Motor neuron (in vitro differentiated cells): ENCODE measurements at regions of chr3 and their contacts with region 1.

Region 1: GRCh38 chr3:136752422-136753325 is 496 bp upstream of the STAG1 start:
- ATAC-seq: peak; percentile 82 to 90 (median 88)
- H3K4me3 ChIP-seq: peak overlapping the region; percentile 62 to 87 (median 78)
- H3K27ac ChIP-seq: peak overlapping the region; percentile 97 to 99
- H3K4me1 ChIP-seq: peaks cover 19 to 26% of the 10 kb centered on the region in 2 donors

Region 2: GRCh38 chr3:136658946-136659682 is 93.6 kb before region 1 on chr3:
- in situ Hi-C with region 1: no loop called
- ATAC-seq: peak; percentile 75 to 99 (median 91)
- H3K4me3 ChIP-seq: peak overlapping the region in 3 of 5 donors; percentile 3 to 16 (median 12)
- H3K27ac ChIP-seq: peak overlapping the region; percentile 44 to 56
- H3K4me1 ChIP-seq: peaks cover 20 to 26% of the 10 kb centered on the region in 2 donors

Region 3: DNA sequence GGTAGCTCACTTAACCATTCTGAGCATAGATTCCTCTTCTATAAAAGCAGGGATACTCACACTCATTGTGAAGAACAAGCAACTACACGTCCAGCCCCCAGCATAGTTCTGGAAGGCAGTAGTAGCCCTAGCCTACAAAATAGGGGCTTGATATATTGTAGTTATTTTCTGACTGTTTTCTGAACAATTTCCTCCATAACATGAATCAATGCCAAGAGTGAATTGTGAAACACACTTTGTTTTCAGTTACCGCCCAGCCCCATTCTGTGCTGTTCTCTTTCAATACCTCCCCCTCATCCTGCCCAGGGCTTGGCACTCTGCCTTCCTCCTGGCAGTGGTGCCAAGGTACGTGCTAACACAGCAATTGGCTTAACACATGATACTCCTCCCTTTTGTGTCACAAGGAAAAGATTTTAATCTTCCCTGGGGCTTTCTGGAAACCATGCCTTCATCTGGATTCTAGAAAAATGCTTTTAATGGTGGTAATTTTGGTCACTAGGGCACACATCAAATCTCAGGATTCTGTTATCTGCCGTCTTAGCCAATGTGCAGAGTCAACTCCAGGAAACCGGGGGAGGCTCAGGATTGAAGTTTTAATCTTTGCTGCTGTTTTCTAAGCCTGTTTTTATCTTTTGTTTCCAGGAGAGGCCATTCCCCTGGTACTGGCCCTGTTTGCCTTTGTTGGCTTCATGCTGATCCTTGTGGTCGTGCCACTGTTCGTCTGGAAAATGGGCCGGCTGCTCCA is 242.3 kb after region 1 on chr3:
- in situ Hi-C with region 1: loop called in 3 of 9 experiments (anchors 25 kb)
- ATAC-seq: peak in 6 of 8 experiments; percentile 41 to 94 (median 66)
- H3K4me3 ChIP-seq: no peak overlapping the region
- H3K27ac ChIP-seq: no peak overlapping the region
- H3K4me1 ChIP-seq: no peaks in the 10 kb centered on the region